BJ (cell line): ENCODE measurements at regions of chr10 and their contacts with region 1.

Region 1: DNA sequence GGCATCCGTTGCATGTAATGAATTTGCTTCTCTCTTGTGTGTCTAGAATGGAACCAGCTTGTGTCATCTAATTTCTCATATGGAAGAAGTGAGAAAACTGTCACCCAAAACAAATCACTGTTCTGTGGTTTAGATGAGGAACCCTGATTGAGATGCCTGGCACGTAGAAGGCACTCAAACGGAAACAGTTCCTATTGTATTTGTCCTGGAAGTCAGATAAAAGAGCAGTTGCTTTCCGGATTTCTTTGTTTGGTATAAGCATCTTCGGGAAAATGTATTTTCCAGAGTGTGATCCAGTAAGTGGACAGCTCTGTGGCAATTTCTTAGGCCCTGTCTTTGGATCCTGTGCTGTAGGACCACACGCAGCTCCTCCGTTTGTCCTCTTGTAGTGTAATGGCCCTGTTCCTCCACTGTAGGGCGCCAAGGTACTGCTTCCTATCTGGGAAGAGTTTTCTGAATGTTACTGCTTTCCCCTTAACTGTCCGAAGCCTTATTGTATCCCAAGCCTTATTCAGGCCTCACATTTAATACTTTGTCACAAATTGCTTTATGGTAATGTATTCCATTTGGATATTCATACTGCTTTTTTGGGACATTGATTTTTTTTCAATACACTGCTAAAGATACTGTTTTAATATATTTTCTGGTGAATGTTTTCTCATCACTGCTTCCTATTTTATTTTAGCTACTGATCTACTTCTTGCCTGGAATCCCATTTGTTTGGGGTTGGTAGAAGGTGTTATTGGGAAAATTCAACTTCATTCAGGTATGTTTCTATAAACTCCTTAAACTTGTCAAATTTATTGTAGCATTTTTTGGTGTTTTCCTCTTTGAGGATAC is 24.8 kb downstream of the INPP5F start:
- DNase-seq: no peak
- H3K4me3 ChIP-seq: no peak overlapping the region
- H3K27me3 ChIP-seq: no peaks in the 10 kb centered on the region
- CTCF ChIP-seq: peak; percentile 94

Region 2: DNA sequence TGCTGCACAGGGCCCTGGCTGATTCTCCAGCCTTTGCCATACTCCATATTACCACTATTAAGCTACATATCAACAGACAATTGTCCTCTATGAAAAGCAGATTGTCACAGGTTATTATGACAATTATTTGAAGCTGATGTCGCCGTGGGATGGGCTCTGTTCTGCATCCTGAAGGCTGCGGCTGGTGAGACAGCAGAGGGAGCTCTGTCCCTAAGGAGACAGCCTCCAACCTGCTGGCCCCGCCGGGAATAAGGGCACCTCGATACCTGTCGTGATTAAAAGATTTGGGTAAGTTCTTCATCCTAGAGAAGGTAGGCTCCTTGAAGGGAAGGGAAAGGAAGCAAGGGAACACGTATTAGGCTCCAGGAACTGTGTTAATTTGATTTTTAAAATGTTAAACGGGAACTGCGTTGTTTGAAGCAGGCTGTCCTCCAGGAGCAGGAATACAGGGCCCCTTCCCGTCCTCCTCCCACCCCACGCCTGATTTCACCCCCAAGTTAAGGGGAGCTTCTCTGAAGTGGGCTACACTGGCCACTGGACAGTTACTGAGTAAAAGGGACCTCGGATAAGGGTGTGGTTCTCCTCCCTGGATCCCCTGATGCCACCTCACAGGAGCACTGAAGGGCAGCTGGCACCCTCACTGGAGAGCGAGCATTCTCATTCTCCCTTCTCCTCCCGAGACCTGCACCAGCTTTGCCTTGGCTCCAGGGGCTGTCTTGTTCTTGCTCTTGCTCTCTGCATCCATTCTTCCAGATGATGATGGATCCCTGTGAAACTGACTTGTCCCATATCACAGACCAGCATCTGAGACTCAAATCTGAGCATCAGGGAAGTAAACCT is 142.1 kb before region 1 on chr10:
- CTCF ChIA-PET with region 1: interaction called, 12 read pairs
- POLR2A ChIA-PET with region 1: no interaction called
- DNase-seq: no peak
- H3K4me3 ChIP-seq: no peak overlapping the region
- H3K27me3 ChIP-seq: no peaks in the 10 kb centered on the region; the same call in 1 of the 2 replicates
- CTCF ChIP-seq: peak; percentile 83

Region 3: GRCh38 chr10:119725828-119726675 is 24.6 kb before region 1 on chr10 and contains the start of gene INPP5F:
- CTCF ChIA-PET with region 1: interaction called, 10 read pairs
- POLR2A ChIA-PET with region 1: no interaction called
- DNase-seq: peak; percentile 82
- H3K4me3 ChIP-seq: peak within 1 kb of the TSS; percentile 69
- H3K27me3 ChIP-seq: no peaks in the 10 kb centered on the region
- CTCF ChIP-seq: 0 out of 2 replicates have a peak, but pooled peaks have one; percentile 11
- polyA plus RNA-seq, gene INPP5F: 4.1 and 7.3 TPM in 2 replicates

Region 4: GRCh38 chr10:119761106-119761505 is 10.5 kb after region 1 on chr10:
- CTCF ChIA-PET with region 1: interaction called, 10 read pairs
- POLR2A ChIA-PET with region 1: no interaction called
- DNase-seq: peak; percentile 88
- H3K4me3 ChIP-seq: no peak overlapping the region
- H3K27me3 ChIP-seq: no peaks in the 10 kb centered on the region
- CTCF ChIP-seq: no peak

Region 5: DNA sequence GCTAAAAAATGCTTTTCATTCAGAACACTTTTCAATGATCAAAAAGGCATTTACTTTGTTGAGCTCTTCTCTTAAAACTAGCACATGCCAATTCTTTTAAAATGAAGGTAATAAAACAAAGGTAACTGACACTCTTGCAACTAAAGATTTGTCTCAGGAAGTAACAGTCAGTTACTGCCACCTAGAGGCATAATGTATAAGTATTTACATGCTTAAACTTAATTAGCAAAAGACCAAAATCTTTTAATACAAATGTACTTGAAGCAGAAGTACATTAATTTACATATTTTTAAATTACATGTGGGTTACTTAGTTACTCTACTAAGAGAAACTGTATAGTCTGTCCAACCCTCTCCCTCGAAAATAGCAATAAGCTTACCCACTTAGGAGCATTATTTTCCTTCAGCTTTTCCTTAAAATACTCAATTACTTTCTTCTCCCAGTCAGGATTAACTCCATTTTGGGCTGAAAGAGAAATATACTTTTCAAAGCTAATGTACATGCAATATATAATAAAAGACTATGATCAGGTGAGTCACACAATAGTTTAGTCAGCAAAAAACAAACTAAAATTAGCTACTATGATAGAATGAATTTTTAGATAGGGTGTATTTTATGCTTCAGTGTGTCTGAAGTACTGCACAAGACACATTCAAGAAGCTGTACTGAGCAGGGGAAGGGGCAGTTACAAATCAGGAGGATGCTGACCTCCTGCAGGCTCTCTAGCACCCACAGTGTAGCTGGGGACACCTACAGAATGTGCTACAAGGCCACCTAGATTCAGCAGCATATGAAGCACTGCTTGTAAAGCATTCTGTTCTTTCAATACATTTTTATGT is 109.0 kb after region 1 on chr10:
- CTCF ChIA-PET with region 1: interaction called, 186 read pairs
- POLR2A ChIA-PET with region 1: no interaction called
- DNase-seq: no peak
- H3K4me3 ChIP-seq: no peak overlapping the region
- H3K27me3 ChIP-seq: no peaks in the 10 kb centered on the region
- CTCF ChIP-seq: peak; percentile 47

Region 6: DNA sequence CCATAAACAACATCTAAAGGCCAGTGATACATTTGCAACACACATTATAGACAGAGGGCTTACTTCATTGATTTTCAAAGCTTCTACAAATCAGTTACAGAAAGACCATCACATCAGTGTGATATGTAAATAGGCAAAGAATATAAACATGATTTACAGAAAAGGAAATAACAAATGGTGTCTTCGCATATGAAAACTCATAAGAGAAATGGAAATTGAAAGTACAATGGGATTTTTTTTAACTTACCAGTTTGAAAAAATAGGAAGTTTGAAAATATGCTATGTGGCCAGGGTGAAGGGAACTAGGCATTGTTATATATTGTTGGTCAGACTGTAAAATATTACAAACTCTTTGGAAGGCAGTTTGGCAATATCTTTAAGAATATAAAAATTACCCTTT is 169.2 kb after region 1 on chr10:
- CTCF ChIA-PET with region 1: interaction called, 13 read pairs
- POLR2A ChIA-PET with region 1: no interaction called
- DNase-seq: no peak
- H3K4me3 ChIP-seq: no peak overlapping the region
- H3K27me3 ChIP-seq: no peaks in the 10 kb centered on the region
- CTCF ChIP-seq: no peak